ENCODE measurements at regions of chr1 and their contacts with region 1.

Region 1: DNA sequence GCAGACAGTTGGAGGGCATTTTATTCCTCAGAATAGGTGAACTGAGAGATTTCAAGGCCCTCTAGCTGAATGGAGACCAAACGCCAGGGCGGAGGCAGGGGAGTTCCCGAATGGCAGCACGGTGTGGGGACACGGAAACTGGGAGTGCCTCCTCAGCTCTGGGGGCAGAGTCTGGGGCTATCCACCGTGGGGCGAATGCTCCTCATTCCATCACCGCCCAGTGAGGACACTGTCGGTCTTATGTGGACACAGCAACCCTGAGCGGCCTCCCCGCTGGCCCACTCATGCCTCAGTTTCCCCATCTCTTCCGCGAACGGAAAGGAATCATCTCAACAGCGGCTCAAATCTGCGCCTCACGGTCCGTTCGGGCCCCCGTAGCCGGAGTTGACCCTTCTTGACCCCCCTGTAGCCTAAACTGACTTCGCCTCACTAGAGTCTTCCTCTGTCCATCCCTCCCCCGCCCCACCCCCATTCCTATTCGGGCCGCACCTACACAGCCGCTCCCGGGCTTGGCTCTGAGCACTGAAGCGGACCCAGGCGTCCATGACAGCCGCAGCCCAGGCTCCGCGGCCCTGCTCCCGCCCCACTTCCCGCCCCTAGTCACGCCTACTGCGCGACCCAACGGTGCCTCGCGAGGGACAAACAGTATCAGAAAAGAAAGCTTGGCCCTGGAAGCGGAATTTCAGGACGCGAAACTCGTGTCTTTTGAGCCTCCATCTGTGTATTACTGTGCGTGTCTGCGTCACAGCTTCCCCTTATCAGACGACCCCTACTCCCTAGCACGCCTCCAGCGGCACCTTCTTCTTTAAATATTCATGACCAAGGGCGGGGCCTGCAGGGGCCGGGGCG is at the start of gene PEX11B:
- DNase-seq: peak; percentile 85
- H3K4me3 ChIP-seq: peak within 1 kb of the TSS; percentile 51 to 89 (median 69)
- H3K27ac ChIP-seq: peak within 1 kb of the TSS; percentile 73
- H3K4me1 ChIP-seq: peaks cover 24% of the 10 kb centered on the region
- H3K27me3 ChIP-seq: no peaks in the 10 kb centered on the region
- CTCF ChIP-seq: no peak
- total RNA-seq, gene PEX11B: 30.4 to 36.3 TPM

Region 2: GRCh38 chr1:145858894-145859490 is 59.4 kb before region 1 on chr1 and contains the start of gene PIAS3:
- CTCF ChIA-PET with region 1: no interaction called
- dilution Hi-C with region 1: no loop called
- in situ Hi-C with region 1: no loop called
- intact Hi-C with region 1: loop called (anchors 1 kb)
- DNase-seq: peak; percentile 93
- H3K4me3 ChIP-seq: peak within 1 kb of the TSS; percentile 56 to 94 (median 80)
- H3K27ac ChIP-seq: peak within 1 kb of the TSS; percentile 29
- H3K4me1 ChIP-seq: peaks cover 13% of the 10 kb centered on the region
- H3K27me3 ChIP-seq: no peaks in the 10 kb centered on the region
- CTCF ChIP-seq: no peak
- total RNA-seq, gene PIAS3: 21.7 to 58.8 TPM

Region 3: GRCh38 chr1:145871994-145872924 is 46.1 kb before region 1 on chr1:
- CTCF ChIA-PET with region 1: no interaction called
- dilution Hi-C with region 1: no loop called
- in situ Hi-C with region 1: no loop called
- intact Hi-C with region 1: loop called (anchors 5 kb)
- DNase-seq: peak; percentile 22
- H3K4me3 ChIP-seq: peak overlapping the region; percentile 27 to 39 (median 31)
- H3K27ac ChIP-seq: no peak overlapping the region
- H3K4me1 ChIP-seq: peaks cover 13% of the 10 kb centered on the region
- H3K27me3 ChIP-seq: no peaks in the 10 kb centered on the region
- CTCF ChIP-seq: no peak

Region 4: GRCh38 chr1:145879775-145880174 is 38.6 kb before region 1 on chr1:
- CTCF ChIA-PET with region 1: no interaction called
- dilution Hi-C with region 1: loop called (anchors 5 kb)
- in situ Hi-C with region 1: no loop called
- intact Hi-C with region 1: loop called (anchors 5 kb)
- DNase-seq: no peak
- H3K4me3 ChIP-seq: no peak overlapping the region
- H3K27ac ChIP-seq: no peak overlapping the region
- H3K4me1 ChIP-seq: peaks cover 9% of the 10 kb centered on the region
- H3K27me3 ChIP-seq: no peaks in the 10 kb centered on the region
- CTCF ChIP-seq: no peak

Region 5: DNA sequence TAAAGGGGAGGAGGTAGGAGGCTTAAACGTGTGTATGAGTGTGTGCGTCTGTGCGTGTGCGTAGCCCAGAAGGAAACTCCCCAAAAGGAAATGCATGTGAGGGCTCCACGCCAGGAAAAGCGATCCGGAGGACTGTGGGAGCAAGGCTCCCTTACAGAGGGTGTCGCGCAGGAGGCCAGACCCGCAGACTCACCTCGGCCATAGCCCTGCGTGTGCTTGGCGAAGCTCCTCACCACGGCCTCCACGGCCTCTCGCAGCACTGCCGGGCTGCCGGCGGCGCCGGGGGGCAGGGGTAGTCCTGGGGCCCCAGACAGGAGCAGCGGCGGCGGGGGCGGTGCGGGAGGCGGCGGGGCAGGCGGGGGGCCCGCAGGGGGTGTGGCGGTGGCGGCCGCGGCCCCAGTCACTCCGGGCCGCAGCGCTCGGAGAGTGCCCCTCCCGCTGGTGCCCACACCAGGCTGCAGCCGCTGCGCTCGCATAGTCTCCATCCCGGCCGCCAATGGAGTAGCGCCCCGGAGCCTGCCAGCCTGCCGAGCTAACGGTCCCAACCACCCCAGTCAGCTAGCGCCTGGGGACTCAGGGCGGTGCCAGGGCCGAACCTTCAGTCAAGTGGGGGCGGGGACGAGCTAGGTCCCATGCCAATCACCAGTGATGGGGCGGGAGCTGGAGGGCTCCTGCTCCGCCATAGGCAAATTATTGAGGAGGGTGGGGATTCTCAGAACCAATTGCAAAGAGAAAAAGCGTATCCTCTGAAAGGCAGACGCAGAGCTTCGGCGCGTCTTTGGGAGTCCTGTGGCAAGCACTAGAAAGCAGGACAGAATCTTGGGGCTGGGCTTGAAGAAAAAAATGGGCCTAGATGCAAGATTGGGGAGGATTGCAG is 39.3 kb after region 1 on chr1 and contains the start of gene LIX1L:
- CTCF ChIA-PET with region 1: interaction called, 5 read pairs
- dilution Hi-C with region 1: loop called (anchors 5 kb)
- in situ Hi-C with region 1: no loop called
- intact Hi-C with region 1: no loop called
- DNase-seq: peak; percentile 97
- H3K4me3 ChIP-seq: peak within 1 kb of the TSS; percentile 60 to 81 (median 71)
- H3K27ac ChIP-seq: peak within 1 kb of the TSS; percentile 62
- H3K4me1 ChIP-seq: peaks cover 45% of the 10 kb centered on the region
- H3K27me3 ChIP-seq: no peaks in the 10 kb centered on the region
- CTCF ChIP-seq: no peak
- total RNA-seq, gene LIX1L: 16.0 TPM

Region 6: GRCh38 chr1:145996433-145997015 is 78.2 kb after region 1 on chr1 and contains the start of gene TXNIP:
- CTCF ChIA-PET with region 1: no interaction called
- dilution Hi-C with region 1: no loop called
- in situ Hi-C with region 1: no loop called
- intact Hi-C with region 1: loop called (anchors 5 kb)
- DNase-seq: peak; percentile 93
- H3K4me3 ChIP-seq: peak within 1 kb of the TSS; percentile 58 to 84 (median 81)
- H3K27ac ChIP-seq: peak within 1 kb of the TSS; percentile 71
- H3K4me1 ChIP-seq: peaks cover 36% of the 10 kb centered on the region
- H3K27me3 ChIP-seq: no peaks in the 10 kb centered on the region
- CTCF ChIP-seq: no peak
- total RNA-seq, gene TXNIP: 92.8 to 355 TPM

Region 7: GRCh38 chr1:146036965-146037646 is 118.7 kb after region 1 on chr1:
- CTCF ChIA-PET with region 1: no interaction called
- dilution Hi-C with region 1: no loop called
- in situ Hi-C with region 1: no loop called
- intact Hi-C with region 1: loop called (anchors 5 kb)
- DNase-seq: peak; percentile 81
- H3K4me3 ChIP-seq: peak overlapping the region; percentile 65 to 81 (median 68)
- H3K27ac ChIP-seq: peak overlapping the region; percentile 63
- H3K4me1 ChIP-seq: no peaks in the 10 kb centered on the region
- H3K27me3 ChIP-seq: no peaks in the 10 kb centered on the region
- CTCF ChIP-seq: no peak